ENCODE measurements at regions of chr1 and their contacts with region 1.

Region 1: GRCh38 chr1:155978325-155978972 is at the start of gene ARHGEF2:
- DNase-seq: peak; percentile 94
- total RNA-seq, gene ARHGEF2: 95.9 TPM

Region 2: DNA sequence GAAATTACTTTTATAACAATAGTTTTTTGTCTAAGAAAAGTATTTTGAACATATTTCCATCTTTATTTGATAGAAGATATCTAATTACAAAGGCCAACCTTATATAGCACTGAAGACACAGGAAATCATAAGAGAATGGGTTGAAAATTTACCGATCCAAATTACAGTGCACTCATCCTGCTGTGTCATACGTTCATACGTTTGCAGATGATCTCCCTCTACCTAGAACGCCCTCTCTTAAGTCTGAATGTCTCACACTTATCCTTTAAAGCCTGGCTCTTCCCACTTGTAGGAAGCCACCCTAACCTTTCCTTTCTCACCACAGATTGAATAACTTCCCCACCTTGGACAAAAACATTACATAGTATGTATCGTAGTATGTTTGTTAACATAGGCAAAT is 425.1 kb before region 1 on chr1:
- intact Hi-C with region 1: no loop called
- DNase-seq: no peak

Region 3: GRCh38 chr1:155920717-155921116 is 57.7 kb before region 1 on chr1:
- intact Hi-C with region 1: no loop called
- DNase-seq: no peak

Region 4: GRCh38 chr1:155961937-155962336 is 16.5 kb before region 1 on chr1:
- intact Hi-C with region 1: loop called (anchors 1 kb)
- DNase-seq: peak; percentile 88

Region 5: DNA sequence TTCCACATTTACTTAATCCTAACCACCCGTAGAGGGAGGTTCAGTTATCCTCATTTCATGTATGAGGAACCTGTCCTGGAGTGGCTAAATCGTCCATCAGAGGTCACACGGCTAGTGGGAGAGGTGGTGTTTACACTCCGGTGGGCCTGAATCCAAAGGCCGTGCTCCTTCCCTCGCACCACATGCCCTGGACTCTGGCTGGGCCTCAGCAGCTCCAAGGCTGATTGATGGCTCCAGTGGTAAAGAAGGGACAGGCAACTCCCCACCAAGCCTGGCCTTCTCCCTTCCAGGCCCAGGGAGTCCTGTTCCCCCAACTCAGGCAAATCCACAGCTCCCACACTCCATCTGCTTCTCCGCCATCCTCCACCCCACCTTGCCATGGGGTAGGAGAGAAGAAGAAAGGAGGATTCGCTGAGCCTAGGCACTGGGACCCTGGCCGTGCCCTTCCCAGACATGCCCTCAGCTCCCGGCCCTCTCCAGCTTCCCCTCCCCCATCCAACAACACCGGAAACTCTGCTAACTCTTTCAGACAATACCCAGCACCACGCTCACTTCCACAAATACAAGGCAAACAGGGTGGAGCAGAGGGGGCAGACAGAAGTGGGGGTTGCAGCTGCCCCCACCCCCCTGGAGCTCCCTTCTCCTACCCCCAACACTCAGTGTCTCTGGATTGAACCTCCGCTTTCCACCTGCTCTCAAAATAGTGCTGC is 11.0 kb before region 1 on chr1:
- intact Hi-C with region 1: loop called (anchors 1 kb)
- DNase-seq: peak; percentile 83

Region 6: GRCh38 chr1:156045076-156045475 is 66.6 kb after region 1 on chr1:
- intact Hi-C with region 1: no loop called
- DNase-seq: no peak

Region 7: DNA sequence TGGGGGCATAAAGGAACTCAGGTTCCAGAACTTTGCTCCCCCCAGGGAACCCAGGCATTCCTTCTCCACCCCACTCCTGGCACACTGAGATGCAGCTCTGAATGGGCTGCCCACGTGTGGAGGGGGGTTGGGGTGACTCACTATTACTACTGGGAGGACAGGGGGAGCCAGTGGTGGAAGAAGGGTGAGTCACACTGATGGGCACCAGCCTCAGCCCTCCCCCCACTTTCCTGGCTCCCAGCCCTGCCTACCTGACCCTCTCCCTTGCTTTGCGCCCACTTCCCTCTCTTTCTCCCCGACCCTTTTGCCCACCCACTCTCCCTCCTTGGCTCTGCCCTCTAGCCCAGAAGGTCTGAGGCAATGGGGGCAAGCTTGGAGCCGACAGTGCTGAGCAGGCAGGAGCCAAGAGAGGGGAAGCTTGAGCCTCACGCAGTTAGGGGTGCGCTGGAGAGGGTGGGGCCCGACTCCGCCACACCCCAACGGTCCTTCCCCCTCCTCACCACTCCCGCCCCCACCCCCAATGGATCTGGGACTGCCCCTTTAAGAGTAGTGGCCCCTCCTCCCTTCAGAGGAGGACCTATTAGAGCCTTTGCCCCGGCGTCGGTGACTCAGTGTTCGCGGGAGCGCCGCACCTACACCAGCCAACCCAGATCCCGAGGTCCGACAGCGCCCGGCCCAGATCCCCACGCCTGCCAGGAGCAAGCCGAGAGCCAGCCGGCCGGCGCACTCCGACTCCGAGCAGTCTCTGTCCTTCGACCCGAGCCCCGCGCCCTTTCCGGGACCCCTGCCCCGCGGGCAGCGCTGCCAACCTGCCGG is 135.9 kb after region 1 on chr1 and contains the start of gene LMNA:
- intact Hi-C with region 1: loop called (anchors 5 kb)
- DNase-seq: peak; percentile 95
- total RNA-seq, gene LMNA: 298 TPM

Region 8: GRCh38 chr1:156421062-156421938 is 442.9 kb after region 1 on chr1:
- intact Hi-C with region 1: no loop called
- DNase-seq: peak; percentile 88